ENCODE measurements at regions of chr4 and their contacts with region 1.

Region 1: DNA sequence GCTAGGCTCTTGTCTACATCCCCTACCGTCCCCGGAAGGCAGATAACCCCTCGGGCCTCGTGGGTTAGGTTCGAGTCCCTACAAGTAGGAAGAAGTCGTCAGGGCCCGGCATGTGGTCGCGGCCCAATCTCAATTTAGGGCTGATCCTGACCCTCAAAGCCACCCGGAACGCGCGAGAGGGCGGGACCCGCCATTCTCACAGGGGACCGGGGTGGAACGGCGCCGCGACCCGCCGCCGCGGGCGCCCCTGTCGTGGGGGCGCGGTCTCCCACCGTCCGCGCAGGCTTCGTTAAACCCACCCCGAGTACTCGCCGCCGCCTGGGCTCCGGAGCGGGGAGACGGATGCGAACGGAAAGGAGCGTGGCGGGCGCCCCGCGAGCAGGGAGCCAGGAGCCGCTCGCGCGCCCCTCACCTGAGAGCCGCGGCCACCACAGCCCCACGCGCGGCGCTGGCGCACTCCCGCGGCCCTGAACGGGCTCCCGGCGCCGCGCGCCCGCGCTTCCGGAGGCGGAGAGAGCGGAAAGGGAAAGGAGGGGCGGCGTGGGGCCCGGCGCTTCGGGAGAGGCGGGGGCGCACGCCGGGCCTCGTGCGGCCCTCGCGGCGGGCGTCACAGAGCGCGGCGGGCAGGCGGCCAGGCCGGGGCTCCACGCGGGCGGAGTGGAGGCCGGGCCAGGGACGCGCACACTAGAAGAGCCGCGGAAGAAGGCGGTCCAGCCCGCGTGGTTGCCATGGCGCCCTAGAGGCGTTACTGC is at the start of gene CFAP97:
- DNase-seq: peak; percentile 85 to 88 (median 86)
- ATAC-seq: peak; percentile 79
- H3K4me3 ChIP-seq: peak within 1 kb of the TSS; percentile 70
- H3K27ac ChIP-seq: peak within 1 kb of the TSS; percentile 93
- H3K4me1 ChIP-seq: peaks cover 20% of the 10 kb centered on the region in 2 experiments
- H3K27me3 ChIP-seq: no peaks in the 10 kb centered on the region
- CTCF ChIP-seq: peak in 1 of 3 experiments; percentile 10; a peak in 1 of 6 replicates
- EP300 ChIP-seq: no peak
- POLR2A ChIP-seq: peak; percentile 70
- RAD21 ChIP-seq: no peak
- polyA plus RNA-seq, gene CFAP97: 17.3 to 42.7 TPM

Region 2: DNA sequence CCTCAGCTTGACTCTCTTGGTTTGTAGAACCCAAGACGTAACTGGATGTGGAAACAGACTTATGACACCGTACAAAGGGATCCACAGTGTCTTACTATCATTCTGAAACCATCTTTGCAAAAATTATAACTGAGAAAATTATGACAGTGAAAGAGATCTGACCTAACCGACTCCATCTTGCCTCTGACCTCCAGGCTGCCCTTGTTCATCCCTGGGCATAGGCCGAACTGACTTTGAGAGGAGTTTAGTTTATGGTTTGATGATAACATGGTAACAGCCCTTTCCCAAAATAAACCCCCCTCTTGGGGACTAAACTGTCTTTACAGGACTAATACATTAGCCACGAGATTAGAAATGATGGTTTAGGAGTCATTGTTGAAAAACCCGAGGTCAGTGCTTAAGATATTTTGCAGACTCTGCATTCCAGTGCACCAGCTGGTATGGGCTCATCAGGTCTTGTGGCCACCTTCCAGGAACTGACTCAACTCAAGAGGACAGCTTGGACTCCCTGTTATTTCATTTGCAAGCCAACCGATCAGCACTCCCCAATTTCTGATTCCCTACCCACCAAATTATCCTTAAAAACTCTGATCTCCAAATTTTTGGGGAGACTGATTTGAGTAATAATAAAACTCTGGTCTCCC is 604.0 kb before region 1 on chr4:
- CTCF ChIA-PET with region 1: no interaction called
- POLR2A ChIA-PET with region 1: no interaction called
- in situ Hi-C with region 1: no loop called
- intact Hi-C with region 1: no loop called
- DNase-seq: no peak
- ATAC-seq: no peak
- H3K4me3 ChIP-seq: no peak overlapping the region
- H3K27ac ChIP-seq: no peak overlapping the region
- H3K4me1 ChIP-seq: peaks cover 7 to 27% of the 10 kb centered on the region in 2 experiments
- H3K27me3 ChIP-seq: no peaks in the 10 kb centered on the region
- CTCF ChIP-seq: no peak
- EP300 ChIP-seq: no peak
- POLR2A ChIP-seq: no peak
- RAD21 ChIP-seq: no peak

Region 3: GRCh38 chr4:185296665-185297460 is 93.2 kb after region 1 on chr4:
- CTCF ChIA-PET with region 1: no interaction called
- POLR2A ChIA-PET with region 1: no interaction called
- in situ Hi-C with region 1: no loop called
- intact Hi-C with region 1: loop called (anchors 2 kb)
- DNase-seq: peak in 2 of 4 experiments; percentile 31 to 39
- ATAC-seq: peak; percentile 76
- H3K4me3 ChIP-seq: no peak overlapping the region
- H3K27ac ChIP-seq: peak overlapping the region; percentile 26
- H3K4me1 ChIP-seq: peaks cover 0 to 15% of the 10 kb centered on the region in 2 experiments; a peak in 3 of 5 replicates
- H3K27me3 ChIP-seq: no peaks in the 10 kb centered on the region
- CTCF ChIP-seq: no peak
- EP300 ChIP-seq: peak; percentile 54; the same call in 1 of the 2 replicates
- POLR2A ChIP-seq: no peak
- RAD21 ChIP-seq: no peak

Region 4: GRCh38 chr4:185457136-185457535 is 253.5 kb after region 1 on chr4:
- CTCF ChIA-PET with region 1: no interaction called
- POLR2A ChIA-PET with region 1: no interaction called
- in situ Hi-C with region 1: no loop called
- intact Hi-C with region 1: loop called (anchors 5 kb)
- DNase-seq: no peak
- ATAC-seq: peak; percentile 73
- H3K4me3 ChIP-seq: no peak overlapping the region
- H3K27ac ChIP-seq: no peak overlapping the region
- H3K4me1 ChIP-seq: no peaks in the 10 kb centered on the region
- H3K27me3 ChIP-seq: peaks cover 11 to 20% of the 10 kb centered on the region in 2 experiments
- CTCF ChIP-seq: 0 out of 6 replicates have a peak, but pooled peaks of 1 of the 3 experiments have one; percentile 9
- EP300 ChIP-seq: no peak
- POLR2A ChIP-seq: no peak
- RAD21 ChIP-seq: no peak